ENCODE measurements at regions of chr14 and their contacts with region 1.

Region 1: GRCh38 chr14:55389330-55389729 is 22.3 kb downstream of the ATG14 start:
- H3K4me3 ChIP-seq: no peak overlapping the region
- H3K27ac ChIP-seq: no peak overlapping the region
- H3K4me1 ChIP-seq: peaks cover 2% of the 10 kb centered on the region; the same call in 1 of the 2 replicates
- CTCF ChIP-seq: no peak

Region 2: GRCh38 chr14:55373784-55374705 is 15.3 kb before region 1 on chr14:
- CTCF ChIA-PET with region 1: no interaction called
- POLR2A ChIA-PET with region 1: no interaction called
- H3K4me3 ChIP-seq: no peak overlapping the region
- H3K27ac ChIP-seq: no peak overlapping the region
- H3K4me1 ChIP-seq: no peaks in the 10 kb centered on the region
- CTCF ChIP-seq: no peak

Region 3: DNA sequence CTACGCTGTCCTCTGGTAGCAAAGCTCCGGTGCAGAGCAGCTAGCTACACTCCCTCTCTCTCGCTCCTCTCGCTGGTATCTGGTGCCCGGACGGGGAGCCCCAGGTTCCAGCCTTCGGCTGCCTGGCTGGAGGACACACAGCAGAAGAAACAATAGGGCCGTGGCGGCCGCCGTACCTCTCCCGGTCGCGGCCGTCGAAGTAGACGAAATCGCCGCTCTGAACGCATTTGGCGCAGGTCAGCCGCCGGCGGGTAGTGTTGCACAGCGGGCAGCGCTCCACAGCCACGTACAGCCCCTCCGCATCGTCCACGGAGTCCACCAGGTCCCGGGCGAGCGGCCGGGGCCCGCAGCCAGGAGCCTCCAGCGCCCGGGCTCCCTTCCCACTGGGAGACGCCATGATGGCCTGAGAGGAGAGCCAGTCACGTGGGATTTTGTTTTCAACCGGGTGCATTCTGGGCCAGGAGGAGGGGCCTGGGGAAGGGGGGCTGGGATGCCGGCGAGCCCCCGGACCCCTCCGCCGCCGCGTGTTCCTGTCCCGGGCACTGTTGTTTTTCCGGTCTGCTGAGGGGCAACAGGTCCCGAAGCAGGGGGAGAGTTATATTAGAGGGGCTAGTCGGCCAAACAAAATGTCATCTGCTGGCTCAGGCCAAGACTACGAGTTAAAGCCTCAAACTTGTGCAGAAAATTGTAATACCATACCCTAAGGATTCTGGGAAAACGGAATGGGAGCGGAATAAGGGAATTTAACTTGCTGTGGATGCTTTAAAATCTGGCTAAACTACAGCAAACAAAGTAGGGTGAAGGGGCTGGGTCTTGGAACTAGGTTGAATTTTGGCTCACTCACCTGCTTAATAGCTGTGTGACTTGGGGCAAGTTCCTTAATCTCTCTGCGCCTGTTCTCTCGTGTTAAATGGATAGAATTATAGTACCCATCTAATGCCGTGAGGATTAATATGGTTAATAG is 22.4 kb after region 1 on chr14 and contains the start of gene ATG14:
- CTCF ChIA-PET with region 1: no interaction called
- POLR2A ChIA-PET with region 1: no interaction called
- H3K4me3 ChIP-seq: peak within 1 kb of the TSS; percentile 93
- H3K27ac ChIP-seq: peak within 1 kb of the TSS; percentile 55; the same call in 1 of the 2 replicates
- H3K4me1 ChIP-seq: 0 out of 2 replicates have a peak, but pooled peaks cover 6% of the 10 kb centered on the region
- CTCF ChIP-seq: no peak

Region 4: GRCh38 chr14:55869397-55870049 is 480.2 kb after region 1 on chr14:
- CTCF ChIA-PET with region 1: no interaction called
- POLR2A ChIA-PET with region 1: interaction called, 11 read pairs
- H3K4me3 ChIP-seq: no peak overlapping the region
- H3K27ac ChIP-seq: no peak overlapping the region
- H3K4me1 ChIP-seq: no peaks in the 10 kb centered on the region
- CTCF ChIP-seq: no peak